CD14-positive monocyte (primary cell): ENCODE measurements at regions of chr1 and their contacts with region 1.

Region 1: GRCh38 chr1:243354511-243355153 is 98.8 kb downstream of the SDCCAG8 start:
- DNase-seq: peak in 1 of 3 donors; percentile 9
- H3K4me3 ChIP-seq: peak overlapping the region; percentile 8 to 65 (median 44)
- H3K4me3 Mint-ChIP-seq: peak overlapping the region; percentile 55 to 72
- H3K27ac ChIP-seq: peak overlapping the region in 1 of 2 donors; percentile 50
- H3K27ac Mint-ChIP-seq: peak overlapping the region in 3 of 7 donors; percentile 20 to 87 (median 48)
- H3K4me1 ChIP-seq: no peaks in the 10 kb centered on the region
- H3K4me1 Mint-ChIP-seq: peaks cover 11% of the 10 kb centered on the region
- H3K27me3 ChIP-seq: no peaks in the 10 kb centered on the region
- H3K27me3 Mint-ChIP-seq: peaks cover 0 to 2% (median 0%) of the 10 kb centered on the region in 3 donors
- CTCF ChIP-seq: no peak

Region 2: DNA sequence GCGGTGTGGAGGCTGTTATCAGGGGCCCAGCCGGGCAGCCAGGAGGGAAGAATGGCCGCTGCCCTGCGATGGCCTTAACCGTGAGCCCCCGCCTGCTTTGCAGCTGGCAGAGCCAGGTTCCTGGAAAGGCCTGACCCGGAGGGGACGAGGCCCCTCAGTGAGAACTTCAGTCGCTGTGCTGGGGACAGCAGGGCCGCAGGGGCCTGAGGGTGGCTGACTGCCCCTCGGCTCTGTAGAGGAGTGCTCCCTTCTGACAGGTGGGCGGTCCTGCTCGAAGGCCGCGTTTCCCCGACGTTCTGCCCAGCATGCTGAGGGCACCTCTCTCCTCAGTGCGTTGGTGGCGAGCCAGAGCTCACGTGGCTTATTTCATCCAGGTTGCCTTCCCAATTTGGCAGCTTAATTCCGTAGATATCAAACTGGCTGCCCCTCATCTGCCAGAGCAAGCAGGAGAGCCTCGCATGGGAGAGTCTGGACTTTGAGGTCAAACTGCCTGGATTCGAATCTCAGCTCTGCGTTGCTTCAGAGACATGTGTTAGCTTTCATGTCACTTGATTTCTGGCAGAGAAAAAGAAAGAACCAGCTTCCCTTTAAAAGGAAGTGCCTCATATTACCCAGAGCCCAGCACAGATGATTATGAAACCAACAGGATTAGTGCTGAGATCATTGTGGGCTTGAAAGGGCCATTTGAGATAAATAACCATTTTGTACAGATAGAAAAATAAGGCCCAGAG is 141.0 kb after region 1 on chr1:
- intact Hi-C with region 1: loop called in 1 of 2 experiments (anchors 10 kb)
- DNase-seq: peak; percentile 77 to 87 (median 82)
- H3K4me3 ChIP-seq: peak overlapping the region; percentile 5 to 43 (median 17)
- H3K4me3 Mint-ChIP-seq: peak overlapping the region; percentile 60 to 82
- H3K27ac ChIP-seq: peak overlapping the region; percentile 95
- H3K27ac Mint-ChIP-seq: peak overlapping the region; percentile 95 to 98 (median 98)
- H3K4me1 ChIP-seq: peaks cover 30 to 37% of the 10 kb centered on the region in 2 donors
- H3K4me1 Mint-ChIP-seq: peaks cover 31% of the 10 kb centered on the region
- H3K27me3 ChIP-seq: no peaks in the 10 kb centered on the region
- H3K27me3 Mint-ChIP-seq: no peaks in the 10 kb centered on the region
- CTCF ChIP-seq: no peak